WTC11 (cell line): ENCODE measurements at regions of chr18 and their contacts with region 1.

Region 1: DNA sequence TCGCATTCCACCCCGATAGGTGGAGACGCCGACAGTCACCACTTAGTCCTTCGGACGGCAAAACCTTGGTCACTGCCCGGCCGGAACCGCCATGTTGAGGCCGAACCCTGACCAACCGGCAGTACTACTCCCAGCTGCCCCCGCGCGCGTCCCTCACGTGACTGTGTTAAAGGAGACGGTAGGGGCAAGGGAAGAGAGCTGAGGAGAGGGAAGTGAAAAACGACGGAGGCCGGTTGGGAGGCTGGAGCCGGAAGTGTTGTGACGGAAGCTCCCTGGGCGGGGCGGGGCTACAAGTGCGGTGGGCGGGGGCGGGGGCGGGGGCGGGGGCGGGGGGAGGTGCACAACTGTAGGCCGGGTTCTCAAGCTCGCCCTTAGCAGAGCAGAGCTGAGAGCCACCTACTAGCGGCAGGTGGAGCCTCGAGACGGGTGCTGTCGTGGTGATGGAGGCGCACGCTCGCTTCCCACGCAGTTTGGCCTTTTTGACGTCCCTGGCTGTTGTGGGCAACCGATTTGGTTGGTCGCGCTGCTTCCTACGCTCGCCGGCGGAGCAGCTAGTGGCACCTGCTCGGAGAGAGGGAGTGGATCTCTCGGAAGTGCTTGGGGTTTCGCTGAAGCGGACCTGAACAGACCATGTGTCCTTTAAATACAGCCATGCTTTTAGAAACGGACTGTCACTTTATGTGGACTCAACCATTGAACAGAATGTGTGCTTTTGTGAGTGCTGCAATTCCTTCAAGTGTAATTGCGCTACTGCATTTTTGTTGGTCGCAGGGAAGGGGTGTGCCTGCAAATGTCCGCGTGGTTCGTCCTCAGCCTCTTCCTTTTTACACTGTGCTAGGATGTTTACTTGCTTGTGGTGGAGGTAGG is at the start of gene TRAPPC8:
- DNase-seq: peak; percentile 96
- ATAC-seq: peak; percentile 83
- H3K4me3 Mint-ChIP-seq: peak within 1 kb of the TSS; percentile 100
- H3K27ac Mint-ChIP-seq: peak within 1 kb of the TSS; percentile 100
- H3K4me1 Mint-ChIP-seq: peaks cover 52% of the 10 kb centered on the region
- H3K27me3 Mint-ChIP-seq: no peaks in the 10 kb centered on the region
- CTCF ChIP-seq: no peak
- total RNA-seq, gene TRAPPC8: 45.4 to 56.3 TPM (median 53.2 TPM) in 3 replicates

Region 2: DNA sequence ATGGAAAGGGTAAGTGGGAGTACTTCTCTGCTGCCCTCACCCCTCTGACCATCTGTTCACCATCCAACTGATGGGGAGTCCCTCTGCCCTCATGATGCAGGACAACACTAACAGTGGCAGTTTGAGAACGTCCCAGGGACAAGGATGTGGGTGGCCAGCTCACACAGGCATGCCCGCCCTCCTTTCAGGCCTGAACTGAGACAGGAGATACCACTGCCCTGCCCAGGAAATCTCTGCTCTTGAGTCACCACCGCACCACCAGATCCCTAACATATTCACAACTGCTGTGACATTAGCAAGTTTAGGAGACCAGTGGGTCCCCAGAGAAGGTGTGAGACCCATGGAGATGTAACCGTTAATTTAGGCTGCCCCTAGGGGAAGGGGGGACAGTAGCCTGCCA is 66.5 kb before region 1 on chr18:
- CTCF ChIA-PET with region 1: no interaction called
- POLR2A ChIA-PET with region 1: no interaction called
- DNase-seq: no peak
- ATAC-seq: no peak
- H3K4me3 Mint-ChIP-seq: no peak overlapping the region
- H3K27ac Mint-ChIP-seq: peak overlapping the region; percentile 35; the same call in 1 of the 2 replicates
- H3K4me1 Mint-ChIP-seq: no peaks in the 10 kb centered on the region
- H3K27me3 Mint-ChIP-seq: no peaks in the 10 kb centered on the region
- CTCF ChIP-seq: no peak

Region 3: DNA sequence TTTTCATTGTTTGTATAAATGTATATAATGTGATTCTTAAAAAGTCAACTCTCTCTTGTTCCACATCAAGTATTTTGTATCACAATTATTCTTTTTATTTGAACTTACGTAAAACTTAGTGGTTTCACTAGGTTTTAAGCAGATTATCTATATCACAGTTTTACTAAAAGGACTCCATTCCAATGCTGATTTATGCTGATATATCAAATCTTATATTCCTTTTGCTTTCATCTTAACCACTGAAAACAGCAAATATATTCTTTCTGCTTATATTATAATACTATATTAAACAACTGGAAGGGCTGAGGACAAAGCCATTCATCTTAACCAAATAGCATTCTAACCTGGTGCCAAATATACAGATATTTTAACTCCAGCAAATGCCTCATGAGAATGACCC is 24.5 kb before region 1 on chr18:
- CTCF ChIA-PET with region 1: no interaction called
- POLR2A ChIA-PET with region 1: no interaction called
- DNase-seq: no peak
- ATAC-seq: no peak
- H3K4me3 Mint-ChIP-seq: no peak overlapping the region
- H3K27ac Mint-ChIP-seq: no peak overlapping the region
- H3K4me1 Mint-ChIP-seq: no peaks in the 10 kb centered on the region
- H3K27me3 Mint-ChIP-seq: no peaks in the 10 kb centered on the region
- CTCF ChIP-seq: no peak

Region 4: DNA sequence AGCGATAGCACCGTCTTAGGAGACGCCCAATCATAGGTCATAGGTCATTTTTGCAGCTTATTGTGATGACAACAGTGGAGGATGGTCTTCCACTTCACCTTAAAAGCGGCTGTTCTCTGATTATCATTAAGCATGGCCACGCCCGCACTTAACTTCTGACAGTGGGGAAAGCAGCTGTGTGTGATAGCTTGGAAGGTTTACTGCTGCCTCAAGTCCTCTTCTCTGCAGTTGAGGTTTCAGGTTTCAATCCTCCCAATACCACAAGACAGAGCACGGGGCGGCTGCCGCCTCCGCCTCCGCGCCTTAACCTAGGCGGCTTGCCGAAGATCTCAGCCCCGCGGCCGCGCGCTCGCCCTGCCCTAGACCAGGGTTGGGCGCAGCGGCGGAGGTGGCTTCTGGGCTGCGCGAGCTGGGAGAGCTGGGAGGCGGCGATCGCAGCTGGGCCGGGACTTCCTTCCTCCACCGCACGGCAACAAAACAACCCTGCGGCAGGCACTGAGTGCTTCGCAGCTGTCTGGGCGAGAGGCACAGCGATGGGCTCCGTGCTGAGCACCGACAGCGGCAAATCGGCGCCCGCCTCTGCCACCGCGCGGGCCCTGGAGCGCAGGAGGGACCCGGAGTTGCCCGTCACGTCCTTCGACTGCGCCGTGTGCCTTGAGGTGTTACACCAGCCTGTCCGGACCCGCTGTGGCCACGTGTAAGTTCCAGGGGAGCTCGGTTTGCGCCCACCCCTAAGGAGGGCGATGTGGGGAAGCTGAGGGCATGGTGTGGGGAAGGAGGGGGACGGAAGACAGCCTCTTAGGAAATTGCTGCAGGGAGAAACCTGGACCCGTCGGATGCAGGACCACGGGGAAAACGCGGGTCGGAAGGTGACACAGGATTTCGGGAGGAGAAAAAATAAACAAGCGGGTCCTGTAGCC is 75.4 kb after region 1 on chr18 and contains the start of gene RNF125:
- CTCF ChIA-PET with region 1: no interaction called
- POLR2A ChIA-PET with region 1: interaction called, 10 read pairs
- DNase-seq: peak; percentile 89
- ATAC-seq: peak; percentile 88
- H3K4me3 Mint-ChIP-seq: peak within 1 kb of the TSS; percentile 91
- H3K27ac Mint-ChIP-seq: peak within 1 kb of the TSS; percentile 95
- H3K4me1 Mint-ChIP-seq: peaks cover 32% of the 10 kb centered on the region
- H3K27me3 Mint-ChIP-seq: peaks cover 15% of the 10 kb centered on the region
- CTCF ChIP-seq: no peak
- total RNA-seq, gene RNF125: 13.8 to 14.9 TPM (median 14.4 TPM) in 3 replicates

Region 5: GRCh38 chr18:32081881-32082280 is 138.6 kb after region 1 on chr18:
- CTCF ChIA-PET with region 1: no interaction called
- POLR2A ChIA-PET with region 1: no interaction called
- DNase-seq: no peak
- ATAC-seq: no peak
- H3K4me3 Mint-ChIP-seq: no peak overlapping the region
- H3K27ac Mint-ChIP-seq: no peak overlapping the region
- H3K4me1 Mint-ChIP-seq: peaks cover 10% of the 10 kb centered on the region
- H3K27me3 Mint-ChIP-seq: no peaks in the 10 kb centered on the region; the same call in 1 of the 2 replicates
- CTCF ChIP-seq: no peak

Region 6: DNA sequence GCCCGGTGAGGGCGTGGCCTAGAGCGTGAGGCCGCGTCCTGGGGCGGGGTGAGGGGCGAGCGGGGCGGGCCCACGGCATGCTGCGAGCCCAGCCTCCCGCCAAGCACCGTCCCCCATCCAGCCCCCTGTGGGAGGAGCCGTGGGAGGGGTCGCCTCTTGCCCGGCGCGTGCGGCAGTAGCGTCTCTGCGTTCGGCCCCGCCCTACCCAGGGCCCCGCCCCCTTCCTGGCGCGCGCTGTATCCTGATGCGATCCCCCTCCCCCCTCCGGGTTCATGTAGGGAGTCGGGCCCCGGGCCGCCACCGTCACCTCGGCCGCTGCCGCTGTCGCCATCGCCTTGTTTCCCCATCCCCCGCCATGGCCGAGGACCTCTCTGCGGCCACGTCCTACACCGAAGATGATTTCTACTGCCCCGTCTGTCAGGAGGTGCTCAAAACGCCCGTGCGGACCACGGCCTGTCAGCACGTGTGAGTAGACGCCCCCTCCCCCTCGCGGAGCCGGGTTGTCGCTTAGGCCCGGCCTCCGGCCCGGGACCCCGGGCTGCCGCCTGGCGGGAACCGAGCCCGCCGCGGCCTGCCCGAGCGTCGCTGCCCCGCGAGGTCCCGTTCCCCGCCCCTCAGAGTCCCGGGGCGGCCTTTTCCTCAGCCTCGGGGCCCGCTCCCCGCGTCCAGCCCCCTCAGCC is 149.3 kb after region 1 on chr18:
- CTCF ChIA-PET with region 1: no interaction called
- POLR2A ChIA-PET with region 1: interaction called, 10 read pairs
- DNase-seq: peak; percentile 99
- ATAC-seq: peak; percentile 95
- H3K4me3 Mint-ChIP-seq: peak overlapping the region; percentile 92
- H3K27ac Mint-ChIP-seq: peak overlapping the region; percentile 96
- H3K4me1 Mint-ChIP-seq: peaks cover 32% of the 10 kb centered on the region
- H3K27me3 Mint-ChIP-seq: no peaks in the 10 kb centered on the region
- CTCF ChIP-seq: no peak